Activated CD8-positive, alpha-beta T cell treated with anti-CD3 and anti-CD28 coated beads, Interleukin-2, amount 10 ng/mL, durations not matched to agents 7 days and 5 days (primary cell): ENCODE measurements at regions of chr19 and their contacts with region 1.

Region 1: GRCh38 chr19:41563854-41564514 is 12.0 kb upstream of the CEACAM21 start:
- DNase-seq: peak; percentile 54
- ATAC-seq: peak; percentile 68
- H3K4me3 Mint-ChIP-seq: peak overlapping the region; percentile 30
- H3K27ac Mint-ChIP-seq: no peak overlapping the region
- H3K4me1 Mint-ChIP-seq: peaks cover 43% of the 10 kb centered on the region
- H3K27me3 Mint-ChIP-seq: peaks cover 28% of the 10 kb centered on the region

Region 2: GRCh38 chr19:41457241-41457640 is 106.7 kb before region 1 on chr19:
- CTCF ChIA-PET with region 1: interaction called, 21 read pairs
- POLR2A ChIA-PET with region 1: no interaction called
- DNase-seq: peak; percentile 46
- ATAC-seq: peak; percentile 93
- H3K4me3 Mint-ChIP-seq: peak overlapping the region; percentile 34
- H3K27ac Mint-ChIP-seq: peak overlapping the region; percentile 81
- H3K4me1 Mint-ChIP-seq: peaks cover 33% of the 10 kb centered on the region
- H3K27me3 Mint-ChIP-seq: peaks cover 26% of the 10 kb centered on the region

Region 3: DNA sequence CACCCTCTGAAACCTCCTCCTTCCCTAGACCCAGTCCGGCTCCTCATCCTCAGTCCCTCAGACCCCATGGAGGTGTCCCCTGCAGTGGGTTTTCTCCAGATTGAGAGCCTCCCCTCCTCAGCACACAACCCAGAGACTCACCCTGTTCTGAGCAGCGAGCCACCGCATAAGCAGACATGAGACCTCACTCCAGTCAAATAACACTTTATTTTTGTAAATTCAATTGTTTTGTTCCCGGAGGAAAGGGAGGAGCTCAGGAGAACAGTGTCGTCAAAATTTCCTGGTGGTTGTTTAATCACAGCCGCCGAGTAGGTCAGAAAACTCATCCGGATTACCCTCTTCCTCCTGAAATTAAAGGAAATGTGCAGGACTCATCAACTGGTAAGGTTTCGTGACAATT is 63.5 kb before region 1 on chr19:
- CTCF ChIA-PET with region 1: no interaction called
- POLR2A ChIA-PET with region 1: no interaction called
- DNase-seq: no peak
- ATAC-seq: no peak
- H3K4me3 Mint-ChIP-seq: no peak overlapping the region
- H3K27ac Mint-ChIP-seq: no peak overlapping the region
- H3K4me1 Mint-ChIP-seq: no peaks in the 10 kb centered on the region
- H3K27me3 Mint-ChIP-seq: peaks cover 18% of the 10 kb centered on the region

Region 4: GRCh38 chr19:41541990-41542584 is 21.9 kb before region 1 on chr19:
- CTCF ChIA-PET with region 1: interaction called, 126 read pairs
- POLR2A ChIA-PET with region 1: no interaction called
- DNase-seq: peak; percentile 81
- ATAC-seq: no peak
- H3K4me3 Mint-ChIP-seq: no peak overlapping the region
- H3K27ac Mint-ChIP-seq: no peak overlapping the region
- H3K4me1 Mint-ChIP-seq: peaks cover 45% of the 10 kb centered on the region
- H3K27me3 Mint-ChIP-seq: no peaks in the 10 kb centered on the region

Region 5: DNA sequence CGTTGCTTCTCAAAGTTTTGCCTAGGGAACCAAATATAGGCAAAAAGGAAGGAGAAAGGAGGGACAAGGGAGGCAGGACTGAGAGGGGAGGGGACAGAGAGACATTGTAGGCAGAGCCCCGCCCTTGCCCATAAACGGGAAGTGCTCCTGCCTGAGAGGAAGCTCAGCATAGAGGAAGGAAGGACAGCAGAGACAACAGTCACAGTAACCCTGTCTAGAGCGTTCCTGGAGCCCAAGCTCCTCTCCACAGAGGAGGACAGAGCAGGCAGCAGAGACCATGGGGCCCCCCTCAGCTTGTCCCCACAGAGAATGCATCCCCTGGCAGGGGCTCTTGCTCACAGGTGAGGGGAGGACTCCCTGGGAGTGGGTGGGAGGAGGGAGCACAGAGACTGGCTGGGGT is 12.0 kb after region 1 on chr19 and contains the start of gene CEACAM21:
- CTCF ChIA-PET with region 1: interaction called, 86 read pairs
- POLR2A ChIA-PET with region 1: no interaction called
- DNase-seq: peak; percentile 72
- ATAC-seq: peak; percentile 99
- H3K4me3 Mint-ChIP-seq: peak within 1 kb of the TSS; percentile 61
- H3K27ac Mint-ChIP-seq: peak within 1 kb of the TSS; percentile 78
- H3K4me1 Mint-ChIP-seq: peaks cover 21% of the 10 kb centered on the region
- H3K27me3 Mint-ChIP-seq: peaks cover 5% of the 10 kb centered on the region
- total RNA-seq, gene CEACAM21: 41.8 to 49.4 TPM

Region 6: DNA sequence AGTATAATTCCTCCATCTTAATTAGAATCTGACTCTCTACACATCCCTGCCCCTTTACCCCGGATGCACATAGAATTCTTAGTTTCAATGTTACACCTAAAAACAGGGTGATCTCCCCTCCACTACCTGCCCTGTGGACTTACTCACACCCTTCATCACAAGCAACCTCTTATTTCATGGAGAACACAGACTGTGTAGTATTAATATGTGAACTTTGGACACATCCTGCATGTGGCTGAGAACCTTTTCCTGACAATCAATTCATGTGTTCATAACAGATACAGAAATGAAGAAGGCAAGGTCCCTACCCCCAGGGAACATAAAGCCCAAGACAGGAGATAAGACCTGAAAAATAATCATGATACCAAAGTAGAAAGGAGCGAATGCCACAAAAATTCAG is 203.1 kb after region 1 on chr19:
- CTCF ChIA-PET with region 1: no interaction called
- POLR2A ChIA-PET with region 1: no interaction called
- DNase-seq: no peak
- ATAC-seq: no peak
- H3K4me3 Mint-ChIP-seq: no peak overlapping the region
- H3K27ac Mint-ChIP-seq: no peak overlapping the region
- H3K4me1 Mint-ChIP-seq: no peaks in the 10 kb centered on the region
- H3K27me3 Mint-ChIP-seq: peaks cover 48% of the 10 kb centered on the region